ENCODE measurements at regions of chr14 and their contacts with region 1.

Region 1: GRCh38 chr14:102591889-102592763 is at the start of gene RCOR1:
- DNase-seq: peak; percentile 99
- H3K4me3 ChIP-seq: peak within 1 kb of the TSS; percentile 83 to 94
- H3K27ac ChIP-seq: peak within 1 kb of the TSS; percentile 98 to 99
- H3K4me1 ChIP-seq: peaks cover 6 to 11% of the 10 kb centered on the region in 2 experiments
- H3K27me3 ChIP-seq: no peaks in the 10 kb centered on the region
- CTCF ChIP-seq: no peak
- EP300 ChIP-seq: peak in 1 of 2 experiments; percentile 59; a peak in 1 of 4 replicates
- RAD21 ChIP-seq: no peak
- polyA plus RNA-seq, gene RCOR1: 8.5 and 8.8 TPM in 2 replicates

Region 2: DNA sequence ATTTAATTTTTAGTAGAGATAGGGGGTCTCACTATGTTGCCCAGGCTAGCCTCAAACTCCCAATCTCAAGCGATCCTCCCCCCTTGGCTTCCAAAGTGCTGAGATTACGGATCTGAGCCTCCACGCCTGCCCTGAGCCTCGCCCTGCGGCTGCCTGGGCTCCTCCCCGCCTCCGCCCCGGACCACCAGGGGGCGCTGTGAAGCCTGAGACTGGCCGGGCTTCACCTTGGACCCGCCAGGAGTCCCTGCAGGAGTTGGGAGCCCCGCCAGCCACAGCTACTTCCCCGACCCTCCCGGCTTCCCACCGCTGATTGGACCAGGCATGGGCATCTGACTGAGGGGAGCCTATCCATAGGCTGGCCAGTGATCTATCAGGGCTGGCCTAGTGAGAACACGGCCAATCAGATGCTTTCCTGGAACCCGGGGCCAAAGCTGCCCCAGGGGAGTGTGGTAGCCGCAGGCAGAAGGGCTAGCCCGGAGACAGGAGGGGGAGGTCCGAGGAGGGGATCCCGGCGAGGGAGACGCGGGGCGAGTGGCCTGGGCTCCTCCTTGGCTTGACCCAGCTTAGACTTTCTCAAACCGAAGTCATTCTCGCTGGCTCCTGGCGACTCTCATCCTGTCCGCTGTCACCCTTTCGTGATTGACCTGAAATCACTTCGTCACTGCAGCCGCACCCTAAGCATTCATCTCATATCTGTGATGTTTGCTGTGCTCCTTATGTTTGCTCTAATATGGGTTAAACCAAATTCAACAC is 67.5 kb before region 1 on chr14:
- CTCF ChIA-PET with region 1: interaction called, 26 read pairs
- POLR2A ChIA-PET with region 1: interaction called, 3 read pairs
- DNase-seq: peak; percentile 99
- H3K4me3 ChIP-seq: peak overlapping the region; percentile 59 to 69
- H3K27ac ChIP-seq: peak overlapping the region; percentile 63 to 80
- H3K4me1 ChIP-seq: peaks cover 0 to 12% of the 10 kb centered on the region in 2 experiments; a peak in 2 of 4 replicates
- H3K27me3 ChIP-seq: no peaks in the 10 kb centered on the region
- CTCF ChIP-seq: peak; percentile 97
- EP300 ChIP-seq: peak in 1 of 2 experiments; percentile 51; a peak in 2 of 4 replicates
- RAD21 ChIP-seq: peak; percentile 77

Region 3: DNA sequence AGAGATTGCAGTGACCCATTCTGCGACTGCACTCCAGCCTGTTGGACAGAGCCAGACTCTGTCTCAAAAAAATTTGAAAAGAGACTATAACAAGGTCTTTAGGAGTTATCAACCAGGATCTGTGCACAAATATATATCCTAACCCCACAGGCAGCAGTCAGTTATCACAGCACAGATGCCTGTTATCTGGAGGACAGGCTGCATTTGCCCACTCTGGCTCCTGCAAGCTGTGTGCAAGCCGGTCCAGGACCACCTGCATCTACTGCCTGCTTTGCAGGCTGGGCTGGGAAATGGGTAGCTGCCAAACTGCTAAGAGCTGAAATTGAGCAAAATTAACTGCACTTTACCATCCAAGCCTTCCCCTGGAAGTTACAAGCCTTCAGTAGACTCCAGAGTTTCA is 21.1 kb before region 1 on chr14:
- CTCF ChIA-PET with region 1: interaction called, 10 read pairs
- POLR2A ChIA-PET with region 1: interaction called, 4 read pairs
- DNase-seq: peak; percentile 67
- H3K4me3 ChIP-seq: no peak overlapping the region
- H3K27ac ChIP-seq: peak overlapping the region in 1 of 2 experiments; percentile 26; a peak in 1 of 4 replicates
- H3K4me1 ChIP-seq: no peaks in the 10 kb centered on the region; a peak in 1 of 4 replicates
- H3K27me3 ChIP-seq: no peaks in the 10 kb centered on the region
- CTCF ChIP-seq: no peak
- EP300 ChIP-seq: no peak
- RAD21 ChIP-seq: no peak

Region 4: DNA sequence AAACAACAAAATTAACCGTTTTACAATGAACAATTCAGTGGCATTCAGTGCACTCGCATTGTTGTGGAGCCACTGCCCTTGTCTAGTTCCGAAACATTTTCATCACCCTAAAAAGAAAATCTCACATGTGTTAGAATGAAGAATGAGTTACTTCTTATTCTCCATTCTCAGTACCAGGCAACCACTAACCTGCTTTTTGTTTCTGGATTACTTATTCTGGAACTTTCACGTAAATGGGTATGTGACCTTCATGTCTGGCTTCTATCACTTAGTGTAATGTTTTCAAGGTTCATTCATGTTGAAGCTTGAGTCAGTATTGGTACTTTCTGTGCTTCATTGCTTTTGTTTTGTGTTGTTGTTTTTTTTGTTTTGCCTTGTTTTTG is 15.9 kb after region 1 on chr14:
- CTCF ChIA-PET with region 1: interaction called, 23 read pairs
- POLR2A ChIA-PET with region 1: no interaction called
- DNase-seq: no peak
- H3K4me3 ChIP-seq: no peak overlapping the region
- H3K27ac ChIP-seq: no peak overlapping the region
- H3K4me1 ChIP-seq: no peaks in the 10 kb centered on the region
- H3K27me3 ChIP-seq: no peaks in the 10 kb centered on the region
- CTCF ChIP-seq: no peak
- EP300 ChIP-seq: no peak
- RAD21 ChIP-seq: no peak

Region 5: GRCh38 chr14:102662636-102663430 is 70.7 kb after region 1 on chr14:
- CTCF ChIA-PET with region 1: interaction called, 11 read pairs
- POLR2A ChIA-PET with region 1: interaction called, 5 read pairs
- DNase-seq: no peak
- H3K4me3 ChIP-seq: no peak overlapping the region
- H3K27ac ChIP-seq: peak overlapping the region in 1 of 2 experiments; percentile 62; a peak in 2 of 4 replicates
- H3K4me1 ChIP-seq: peaks cover 0 to 15% of the 10 kb centered on the region in 2 experiments; a peak in 3 of 4 replicates
- H3K27me3 ChIP-seq: no peaks in the 10 kb centered on the region
- CTCF ChIP-seq: no peak
- EP300 ChIP-seq: no peak
- RAD21 ChIP-seq: no peak

Measured in SK-N-SH (cell line).